ENCODE measurements at regions of chr1 and their contacts with region 1.

Region 1: GRCh38 chr1:150515328-150516048 is at the start of gene FALEC:
- DNase-seq: peak; percentile 99
- H3K4me3 ChIP-seq: peak within 1 kb of the TSS; percentile 46 to 63 (median 56)
- H3K27ac ChIP-seq: peak within 1 kb of the TSS; percentile 87 to 94 (median 92)
- H3K4me1 ChIP-seq: peaks cover 0 to 26% (median 21%) of the 10 kb centered on the region in 4 donors
- H3K27me3 ChIP-seq: no peaks in the 10 kb centered on the region
- CTCF ChIP-seq: no peak
- EP300 ChIP-seq: no peak
- POLR2A ChIP-seq: peak in 1 of 2 donors; percentile 32
- total RNA-seq, gene FALEC: not detected

Region 2: GRCh38 chr1:150006626-150007421 is 508.7 kb before region 1 on chr1:
- intact Hi-C with region 1: no loop called
- DNase-seq: no peak
- H3K4me3 ChIP-seq: peak overlapping the region in 1 of 4 donors; percentile 13
- H3K27ac ChIP-seq: peak overlapping the region; percentile 1 to 99 (median 55)
- H3K4me1 ChIP-seq: peaks cover 0 to 72% (median 51%) of the 10 kb centered on the region in 4 donors
- H3K27me3 ChIP-seq: no peaks in the 10 kb centered on the region
- CTCF ChIP-seq: no peak
- EP300 ChIP-seq: no peak
- POLR2A ChIP-seq: no peak

Region 3: DNA sequence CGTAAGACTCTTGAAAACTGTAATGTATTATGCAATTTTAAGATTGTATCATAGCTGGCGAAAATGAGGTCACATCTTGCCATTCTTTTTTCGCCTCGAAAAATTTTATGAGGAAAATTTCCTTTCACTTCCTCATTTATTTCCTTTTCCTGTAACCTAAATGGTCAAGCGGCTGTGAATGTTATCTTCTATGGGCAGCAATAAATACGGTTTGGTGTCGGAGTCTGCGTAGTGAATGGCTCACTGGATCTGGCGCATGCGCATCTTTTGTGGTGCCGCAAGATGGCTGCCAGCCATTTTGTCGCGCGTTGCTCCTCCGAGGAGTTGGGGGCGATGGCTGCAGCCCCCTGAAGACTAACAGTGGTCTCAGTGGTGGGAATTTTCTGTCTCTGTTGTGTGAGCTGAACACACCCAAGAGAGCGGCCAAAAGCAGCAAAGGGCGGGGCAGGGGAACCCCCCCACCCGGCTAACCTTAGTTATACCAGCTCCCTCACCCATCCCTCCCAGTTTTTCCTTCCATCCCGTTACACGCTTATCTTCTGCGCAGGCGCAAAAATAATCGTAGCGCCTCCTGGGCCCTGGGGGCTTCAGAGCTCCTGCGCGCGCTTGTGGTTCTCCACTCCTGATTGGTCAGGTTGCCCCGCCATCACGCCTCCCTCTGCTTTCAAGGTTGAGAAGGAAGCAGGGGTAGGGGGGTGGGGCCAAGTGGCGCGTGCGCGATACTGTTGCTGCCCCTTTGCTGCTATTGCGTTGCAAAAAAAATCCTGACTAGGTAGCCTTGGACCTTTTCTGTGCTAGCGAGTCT is 151.9 kb before region 1 on chr1 and contains the start of gene RPRD2:
- intact Hi-C with region 1: loop called (anchors 5 kb)
- DNase-seq: peak; percentile 100
- H3K4me3 ChIP-seq: peak within 1 kb of the TSS; percentile 62 to 80 (median 70)
- H3K27ac ChIP-seq: peak within 1 kb of the TSS; percentile 90 to 98 (median 97)
- H3K4me1 ChIP-seq: peaks cover 0 to 30% (median 15%) of the 10 kb centered on the region in 4 donors
- H3K27me3 ChIP-seq: no peaks in the 10 kb centered on the region
- CTCF ChIP-seq: no peak
- EP300 ChIP-seq: peak in 2 of 4 donors; percentile 32 to 40
- POLR2A ChIP-seq: peak; percentile 57 to 70
- total RNA-seq, gene RPRD2: 16.2 to 26.7 (median 21.2) TPM

Region 4: GRCh38 chr1:150464422-150464826 is 51.1 kb before region 1 on chr1:
- intact Hi-C with region 1: loop called (anchors 5 kb)
- DNase-seq: peak; percentile 78
- H3K4me3 ChIP-seq: no peak overlapping the region
- H3K27ac ChIP-seq: no peak overlapping the region
- H3K4me1 ChIP-seq: no peaks in the 10 kb centered on the region
- H3K27me3 ChIP-seq: no peaks in the 10 kb centered on the region
- CTCF ChIP-seq: peak; percentile 46 to 83 (median 78)
- EP300 ChIP-seq: no peak
- POLR2A ChIP-seq: no peak

Region 5: DNA sequence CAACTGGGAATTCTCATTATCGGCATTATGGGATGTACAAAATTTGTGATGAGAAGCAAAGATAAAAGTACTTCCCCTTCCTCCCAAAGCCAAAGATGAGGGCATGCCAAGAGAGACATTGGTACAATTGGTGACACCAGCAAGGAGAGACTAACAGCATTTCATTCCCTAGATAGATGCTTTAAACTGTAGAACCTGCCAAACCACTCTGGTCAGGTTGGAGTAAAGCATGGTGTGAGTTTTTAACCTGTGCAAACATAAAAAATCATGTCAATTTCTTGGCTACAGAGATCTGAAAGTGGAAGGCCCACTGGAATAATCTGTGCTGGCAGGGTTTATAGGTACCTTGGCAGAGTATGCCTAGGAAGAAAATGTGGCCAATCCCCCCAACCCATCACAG is 390.9 kb after region 1 on chr1:
- intact Hi-C with region 1: no loop called
- DNase-seq: no peak
- H3K4me3 ChIP-seq: no peak overlapping the region
- H3K27ac ChIP-seq: no peak overlapping the region
- H3K4me1 ChIP-seq: no peaks in the 10 kb centered on the region
- H3K27me3 ChIP-seq: no peaks in the 10 kb centered on the region
- CTCF ChIP-seq: no peak
- EP300 ChIP-seq: no peak
- POLR2A ChIP-seq: no peak

Measured in sigmoid colon (tissue), 7 donors.